ENCODE measurements at regions of chr22 and their contacts with region 1.

Region 1: GRCh38 chr22:20756846-20757245 is 17.1 kb upstream of the SERPIND1 start:
- DNase-seq: no peak
- H3K4me3 Mint-ChIP-seq: no peak overlapping the region
- H3K27ac Mint-ChIP-seq: no peak overlapping the region
- H3K4me1 Mint-ChIP-seq: no peaks in the 10 kb centered on the region
- H3K27me3 Mint-ChIP-seq: no peaks in the 10 kb centered on the region

Region 2: DNA sequence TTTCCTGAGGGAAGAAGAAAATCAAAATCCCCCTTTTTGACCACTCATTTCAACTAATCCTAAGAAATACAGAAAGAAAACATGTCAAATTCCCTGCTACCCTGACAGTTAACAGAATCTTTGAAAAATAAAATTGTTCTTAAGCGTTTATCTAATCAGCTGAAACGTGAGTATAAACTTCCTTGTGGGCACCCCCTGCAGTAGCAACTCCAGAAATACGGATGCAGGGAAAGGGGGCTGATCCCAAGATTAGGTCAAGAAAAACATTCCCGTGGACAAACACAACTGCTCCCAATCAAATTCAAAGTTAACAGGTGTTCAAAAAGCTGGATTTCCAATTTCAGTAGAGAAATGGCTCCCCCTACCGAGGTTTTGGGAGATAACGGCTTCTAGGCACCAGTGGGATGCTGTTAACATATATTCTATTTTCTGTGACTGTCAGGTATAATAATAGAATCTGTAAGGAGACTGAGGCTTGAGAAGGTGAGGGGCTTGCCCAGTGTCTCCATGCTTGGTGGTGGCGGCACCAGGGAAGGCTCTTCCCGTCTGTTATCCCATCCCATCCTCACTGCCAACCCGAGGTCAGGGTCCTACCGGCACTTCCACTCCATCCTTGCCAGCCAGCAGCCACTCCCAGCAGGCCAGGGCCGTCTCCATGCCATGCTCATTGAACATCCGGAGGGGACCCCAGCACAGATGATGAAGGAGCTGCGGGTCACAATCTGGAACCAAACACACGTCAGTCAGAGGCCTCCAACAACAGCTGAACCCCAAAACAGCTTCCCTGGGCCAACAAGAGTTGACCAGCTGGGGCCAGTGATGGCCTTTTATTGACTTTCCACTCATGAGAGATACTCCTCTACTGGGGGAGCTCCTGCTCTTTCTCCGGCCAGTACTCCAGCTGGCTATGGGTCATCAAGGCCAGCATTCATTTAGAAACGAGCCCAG is 14.9 kb before region 1 on chr22:
- CTCF ChIA-PET with region 1: interaction called, 16 read pairs
- POLR2A ChIA-PET with region 1: no interaction called
- intact Hi-C with region 1: no loop called
- DNase-seq: peak; percentile 50
- H3K4me3 Mint-ChIP-seq: no peak overlapping the region
- H3K27ac Mint-ChIP-seq: no peak overlapping the region
- H3K4me1 Mint-ChIP-seq: no peaks in the 10 kb centered on the region
- H3K27me3 Mint-ChIP-seq: no peaks in the 10 kb centered on the region